SK-N-SH (cell line): ENCODE measurements at regions of chr2 and their contacts with region 1.

Region 1: DNA sequence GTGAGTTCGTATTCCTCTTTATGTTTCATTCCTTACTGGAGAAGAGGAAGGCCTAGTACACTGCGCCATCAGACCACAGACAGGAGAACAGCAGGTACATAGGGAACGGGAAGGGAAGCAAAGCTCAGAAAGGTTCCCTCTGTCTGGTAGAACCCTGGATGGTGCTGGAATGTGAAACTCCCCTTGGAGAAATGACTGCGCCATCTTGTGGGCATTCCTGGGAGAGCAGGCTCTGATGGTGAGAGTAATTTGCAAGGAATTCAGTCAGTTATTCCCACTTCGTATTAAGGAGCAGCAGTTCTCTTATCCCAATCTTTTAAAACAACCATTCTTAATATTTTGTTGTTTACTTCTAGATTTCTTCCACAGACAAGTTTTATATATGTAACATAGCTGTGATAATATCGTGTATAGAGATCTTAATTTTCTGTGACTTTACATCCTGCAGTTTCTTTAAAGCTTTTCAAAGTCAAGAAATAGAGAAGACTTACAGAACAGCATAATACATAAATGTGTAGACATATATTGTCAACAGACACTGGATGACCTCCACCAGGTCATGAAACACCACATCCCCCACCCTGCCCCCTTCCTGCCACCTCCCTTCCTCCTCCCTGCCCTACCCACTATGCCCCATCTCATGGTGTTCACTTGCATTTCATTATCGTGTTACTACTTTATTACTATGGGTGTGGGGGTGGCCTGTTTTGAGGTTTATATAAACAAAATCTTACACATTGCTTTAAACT is 83.9 kb downstream of the ARHGEF4 start:
- DNase-seq: peak; percentile 87
- H3K4me3 ChIP-seq: peak overlapping the region in 1 of 2 experiments; percentile 23; a peak in 1 of 4 replicates
- H3K27ac ChIP-seq: no peak overlapping the region
- H3K4me1 ChIP-seq: no peaks in the 10 kb centered on the region
- H3K27me3 ChIP-seq: no peaks in the 10 kb centered on the region
- CTCF ChIP-seq: peak; percentile 89
- EP300 ChIP-seq: no peak
- RAD21 ChIP-seq: peak; percentile 79

Region 2: GRCh38 chr2:130845510-130846085 is 75.0 kb before region 1 on chr2:
- CTCF ChIA-PET with region 1: no interaction called
- POLR2A ChIA-PET with region 1: no interaction called
- DNase-seq: no peak
- H3K4me3 ChIP-seq: no peak overlapping the region
- H3K27ac ChIP-seq: no peak overlapping the region
- H3K4me1 ChIP-seq: no peaks in the 10 kb centered on the region; a peak in 1 of 4 replicates
- H3K27me3 ChIP-seq: no peaks in the 10 kb centered on the region
- CTCF ChIP-seq: no peak
- EP300 ChIP-seq: no peak
- RAD21 ChIP-seq: no peak

Region 3: GRCh38 chr2:130884503-130884902 is 36.1 kb before region 1 on chr2:
- CTCF ChIA-PET with region 1: interaction called, 17 read pairs
- POLR2A ChIA-PET with region 1: no interaction called
- DNase-seq: no peak
- H3K4me3 ChIP-seq: no peak overlapping the region
- H3K27ac ChIP-seq: no peak overlapping the region; a peak in 1 of 4 replicates
- H3K4me1 ChIP-seq: peaks cover 0 to 17% of the 10 kb centered on the region in 2 experiments; a peak in 2 of 4 replicates
- H3K27me3 ChIP-seq: no peaks in the 10 kb centered on the region; the same call in 1 of the 2 replicates
- CTCF ChIP-seq: no peak
- EP300 ChIP-seq: no peak
- RAD21 ChIP-seq: peak; percentile 42

Region 4: GRCh38 chr2:130930740-130931659 is 10.4 kb after region 1 on chr2:
- CTCF ChIA-PET with region 1: interaction called, 13 read pairs
- POLR2A ChIA-PET with region 1: no interaction called
- DNase-seq: no peak
- H3K4me3 ChIP-seq: no peak overlapping the region
- H3K27ac ChIP-seq: no peak overlapping the region
- H3K4me1 ChIP-seq: no peaks in the 10 kb centered on the region
- H3K27me3 ChIP-seq: no peaks in the 10 kb centered on the region
- CTCF ChIP-seq: no peak
- EP300 ChIP-seq: no peak
- RAD21 ChIP-seq: no peak

Region 5: DNA sequence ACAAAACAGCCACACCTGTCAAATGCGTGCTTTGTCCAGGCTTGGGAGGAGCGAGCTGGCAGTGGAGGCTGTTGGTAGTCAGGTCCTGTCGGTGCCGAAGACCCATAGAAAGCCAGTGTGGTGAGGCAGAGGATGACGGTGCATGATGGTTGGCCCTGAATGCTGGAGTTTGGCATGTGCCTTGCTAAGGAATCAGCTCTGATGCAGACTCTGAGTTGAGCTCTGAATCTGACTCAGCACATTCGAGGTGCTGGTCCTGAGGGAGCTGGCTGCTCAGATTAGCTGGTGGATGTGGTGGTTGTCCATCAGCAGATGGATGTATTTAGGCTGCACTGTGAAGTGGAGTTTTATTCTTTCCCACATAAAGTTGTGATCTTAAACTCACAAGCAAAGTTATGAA is 27.4 kb after region 1 on chr2:
- CTCF ChIA-PET with region 1: interaction called, 11 read pairs
- POLR2A ChIA-PET with region 1: no interaction called
- DNase-seq: no peak
- H3K4me3 ChIP-seq: no peak overlapping the region
- H3K27ac ChIP-seq: no peak overlapping the region
- H3K4me1 ChIP-seq: no peaks in the 10 kb centered on the region
- H3K27me3 ChIP-seq: no peaks in the 10 kb centered on the region
- CTCF ChIP-seq: no peak
- EP300 ChIP-seq: no peak
- RAD21 ChIP-seq: no peak

Region 6: DNA sequence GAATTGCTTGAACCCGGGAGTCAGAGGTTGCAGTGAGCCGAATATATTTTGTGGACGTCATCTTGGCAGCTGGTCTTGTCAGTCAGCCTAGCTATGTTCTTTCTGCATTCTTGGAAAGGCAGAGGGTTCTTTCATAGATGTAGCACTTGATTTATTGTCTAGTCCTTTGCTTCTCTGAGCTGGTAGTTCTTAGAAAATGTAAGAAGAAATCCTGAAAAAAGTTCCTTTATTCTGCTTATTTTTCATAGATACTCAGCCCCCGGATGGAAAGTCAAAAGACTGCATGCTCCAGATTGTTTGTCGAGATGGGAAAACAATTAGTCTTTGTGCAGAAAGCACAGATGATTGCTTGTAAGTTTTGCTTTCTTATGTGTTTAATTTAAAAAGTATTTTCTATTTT is 205.8 kb after region 1 on chr2:
- CTCF ChIA-PET with region 1: no interaction called
- POLR2A ChIA-PET with region 1: no interaction called
- DNase-seq: no peak
- H3K4me3 ChIP-seq: no peak overlapping the region
- H3K27ac ChIP-seq: no peak overlapping the region
- H3K4me1 ChIP-seq: no peaks in the 10 kb centered on the region
- H3K27me3 ChIP-seq: no peaks in the 10 kb centered on the region
- CTCF ChIP-seq: no peak
- EP300 ChIP-seq: no peak
- RAD21 ChIP-seq: no peak